Dorsolateral prefrontal cortex (tissue), 120 donors: ENCODE measurements at regions of chr1 and their contacts with region 1.

Region 1: DNA sequence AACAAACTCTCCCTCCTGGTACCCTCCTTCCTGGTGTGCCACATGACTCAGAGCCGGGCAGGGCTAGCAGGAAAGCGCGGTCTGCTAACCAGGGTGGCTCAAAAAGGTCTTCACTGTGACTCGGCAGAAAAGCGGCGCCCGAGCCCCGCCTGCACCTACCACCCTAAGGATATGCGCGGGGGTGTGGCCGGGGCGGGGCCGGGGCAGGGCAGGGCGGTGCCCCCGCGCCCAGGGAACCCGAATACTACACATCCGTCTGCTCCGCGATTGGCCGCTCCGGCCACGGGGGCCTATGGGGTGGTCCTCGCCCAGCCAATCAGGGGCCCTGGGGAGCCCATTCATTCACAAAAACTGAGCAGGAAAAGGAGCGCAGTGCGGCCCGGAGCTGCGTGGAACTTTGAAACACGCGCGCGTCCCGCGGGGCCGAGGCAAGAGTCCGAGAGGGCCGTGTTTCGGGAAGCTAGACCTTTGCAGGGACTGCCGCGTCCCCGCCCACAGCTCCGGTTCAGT is 1.7 kb downstream of the LRP8 start:
- DNase-seq: peak; percentile 51 to 89 (median 78)
- H3K4me3 ChIP-seq: peak overlapping the region; percentile 58 to 95 (median 85)
- H3K27ac ChIP-seq: peak overlapping the region in 32 of 59 donors; percentile 1 to 85 (median 53)
- H3K27me3 ChIP-seq: no peaks in the 10 kb centered on the region
- CTCF ChIP-seq: no peak

Region 2: DNA sequence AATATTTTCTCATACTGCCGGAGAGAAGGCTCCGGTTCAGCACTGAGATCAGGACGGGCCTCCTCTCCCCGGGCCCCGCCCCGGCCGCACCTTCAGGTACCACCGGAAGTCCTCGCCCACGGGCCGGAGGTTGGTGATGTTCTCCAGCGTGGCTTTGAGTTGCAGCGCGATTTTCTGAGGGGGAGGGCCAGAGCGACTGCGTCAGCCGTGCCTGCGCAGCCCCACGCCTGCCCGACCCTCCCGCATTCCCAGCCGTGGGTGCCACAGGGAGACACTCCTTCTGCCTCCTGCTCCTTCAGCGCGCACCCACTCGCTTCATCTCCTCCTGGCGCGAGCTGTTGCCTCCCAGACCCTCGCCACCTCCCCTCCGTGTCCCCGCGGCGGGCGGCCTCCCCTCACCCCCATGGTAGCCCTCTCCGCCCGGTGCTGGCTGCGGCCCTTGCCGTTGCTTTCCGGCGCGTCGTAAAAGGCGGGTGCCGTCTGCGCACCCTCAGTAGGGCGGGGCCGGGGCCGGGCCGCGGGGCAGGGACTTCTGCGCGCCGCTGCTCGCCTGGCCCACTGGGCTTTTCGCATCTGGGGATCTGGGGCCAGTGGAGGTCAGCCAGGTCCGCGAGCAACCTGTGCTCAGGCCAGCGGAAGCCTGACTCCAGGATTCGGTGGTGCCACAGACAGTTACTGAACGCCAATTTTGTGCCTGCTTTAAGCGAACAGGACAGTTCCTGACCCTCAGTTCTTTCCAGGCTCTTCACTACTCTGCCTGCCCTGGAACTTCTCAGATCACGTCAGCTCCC is 105.8 kb before region 1 on chr1 and contains the start of gene CZIB:
- intact Hi-C with region 1: loop called in 1 of 2 experiments (anchors 5 kb)
- DNase-seq: peak; percentile 80 to 97 (median 90)
- H3K4me3 ChIP-seq: peak within 1 kb of the TSS; percentile 67 to 99 (median 89)
- H3K27ac ChIP-seq: peak within 1 kb of the TSS; percentile 65 to 99 (median 96)
- H3K27me3 ChIP-seq: no peaks in the 10 kb centered on the region
- CTCF ChIP-seq: peak in 21 of 56 donors; percentile 5 to 40 (median 19)
- total RNA-seq, gene CZIB: 49.0 to 99.7 (median 72.4) TPM

Region 3: DNA sequence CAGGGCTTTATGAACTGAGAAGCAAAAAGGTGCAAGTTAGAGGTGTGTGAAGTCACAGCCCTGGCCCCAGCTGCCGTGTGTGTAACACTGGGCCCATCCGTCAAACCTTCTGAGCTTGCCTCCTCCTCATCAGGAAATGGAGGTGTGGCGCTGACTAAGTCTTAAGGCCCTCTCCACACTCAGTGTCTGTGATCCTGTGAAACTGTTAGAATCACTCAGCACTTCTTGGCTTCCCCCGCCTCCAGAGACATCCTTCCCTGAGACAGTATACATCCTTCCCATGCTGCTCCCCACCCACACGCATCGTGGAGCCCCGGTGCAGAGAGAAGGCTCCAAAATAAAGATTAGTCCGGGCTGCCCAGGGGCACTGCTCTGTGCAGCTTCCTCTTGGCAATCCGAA is 31.6 kb before region 1 on chr1:
- intact Hi-C with region 1: loop called in 1 of 2 experiments (anchors 5 kb)
- DNase-seq: peak in 7 of 10 donors; percentile 39 to 81 (median 69)
- H3K4me3 ChIP-seq: no peak overlapping the region
- H3K27ac ChIP-seq: peak overlapping the region in 43 of 59 donors; percentile 8 to 81 (median 57)
- H3K27me3 ChIP-seq: no peaks in the 10 kb centered on the region
- CTCF ChIP-seq: no peak